ENCODE measurements at regions of chr4 and their contacts with region 1.

Region 1: GRCh38 chr4:37686373-37687193 is at the start of gene RELL1:
- DNase-seq: peak; percentile 96 to 100 (median 99)
- H3K4me3 ChIP-seq: peak within 1 kb of the TSS; percentile 81 to 93 (median 89)
- H3K4me3 Mint-ChIP-seq: peak within 1 kb of the TSS; percentile 88 to 89
- H3K27ac ChIP-seq: peak within 1 kb of the TSS; percentile 78 to 90
- H3K27ac Mint-ChIP-seq: peak within 1 kb of the TSS; percentile 85 to 97 (median 91)
- H3K4me1 ChIP-seq: peaks cover 41 to 54% of the 10 kb centered on the region in 2 donors
- H3K4me1 Mint-ChIP-seq: peaks cover 50% of the 10 kb centered on the region
- H3K27me3 ChIP-seq: no peaks in the 10 kb centered on the region
- H3K27me3 Mint-ChIP-seq: no peaks in the 10 kb centered on the region
- CTCF ChIP-seq: no peak
- polyA plus RNA-seq, gene RELL1: 13.3 to 30.2 (median 16.2) TPM

Region 2: DNA sequence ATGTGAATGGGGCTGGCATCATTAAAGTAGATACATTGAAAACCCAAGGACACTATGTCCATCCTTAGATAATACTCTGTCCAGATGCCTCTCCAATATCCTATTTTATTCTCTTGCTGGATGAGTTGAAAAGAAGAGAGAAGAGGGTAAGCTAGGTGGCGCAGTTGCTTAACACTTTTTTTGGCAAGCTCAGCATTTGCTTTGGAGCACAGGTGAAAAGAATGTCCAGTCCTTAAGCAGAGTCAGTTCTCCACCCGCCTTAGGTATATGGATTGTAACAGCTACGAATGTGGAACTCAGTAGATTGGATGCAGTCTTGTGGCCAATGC is 233.7 kb before region 1 on chr4:
- intact Hi-C with region 1: no loop called
- DNase-seq: peak; percentile 10 to 39 (median 22)
- H3K4me3 ChIP-seq: peak overlapping the region in 1 of 3 experiments; percentile 81
- H3K4me3 Mint-ChIP-seq: peak overlapping the region; percentile 78 to 89
- H3K27ac ChIP-seq: no peak overlapping the region
- H3K27ac Mint-ChIP-seq: peak overlapping the region in 1 of 7 donors; percentile 63
- H3K4me1 ChIP-seq: peaks cover 13 to 16% of the 10 kb centered on the region in 2 donors
- H3K4me1 Mint-ChIP-seq: peaks cover 16% of the 10 kb centered on the region
- H3K27me3 ChIP-seq: peaks cover 36 to 52% of the 10 kb centered on the region in 2 donors
- H3K27me3 Mint-ChIP-seq: peaks cover 38 to 53% (median 43%) of the 10 kb centered on the region in 3 donors
- CTCF ChIP-seq: peak; percentile 45

Region 3: DNA sequence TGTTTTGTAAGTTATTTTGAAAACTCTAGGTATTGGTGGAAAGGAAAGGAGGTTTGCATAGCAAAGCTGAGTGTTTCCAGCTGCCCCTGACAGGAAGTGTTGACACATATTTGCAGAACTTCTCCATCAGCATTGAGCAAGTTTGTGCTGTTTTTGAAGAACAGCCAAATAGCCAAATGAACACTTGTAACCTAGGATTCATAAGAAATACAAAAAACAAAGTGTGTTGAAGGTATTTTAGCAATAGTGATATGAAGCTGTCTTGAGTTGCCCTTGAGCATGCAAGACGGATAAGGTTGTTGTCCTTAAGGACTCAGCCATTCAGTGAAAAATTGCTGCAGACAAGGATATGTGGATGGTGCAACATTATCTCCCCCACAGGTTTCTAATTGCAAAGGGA is 71.6 kb after region 1 on chr4:
- intact Hi-C with region 1: loop called (anchors 5 kb)
- DNase-seq: peak; percentile 86 to 94 (median 90)
- H3K4me3 ChIP-seq: peak overlapping the region in 2 of 3 experiments; percentile 20 to 48
- H3K4me3 Mint-ChIP-seq: peak overlapping the region; percentile 47 to 83
- H3K27ac ChIP-seq: peak overlapping the region; percentile 86 to 92
- H3K27ac Mint-ChIP-seq: peak overlapping the region; percentile 95 to 99 (median 97)
- H3K4me1 ChIP-seq: peaks cover 98 to 100% of the 10 kb centered on the region in 2 donors
- H3K4me1 Mint-ChIP-seq: peaks cover 90% of the 10 kb centered on the region
- H3K27me3 ChIP-seq: no peaks in the 10 kb centered on the region
- H3K27me3 Mint-ChIP-seq: no peaks in the 10 kb centered on the region
- CTCF ChIP-seq: no peak

Region 4: GRCh38 chr4:37977471-37978247 is 291.1 kb after region 1 on chr4:
- intact Hi-C with region 1: loop called (anchors 5 kb)
- DNase-seq: peak; percentile 70 to 85 (median 79)
- H3K4me3 ChIP-seq: peak overlapping the region; percentile 41 to 95 (median 83)
- H3K4me3 Mint-ChIP-seq: peak overlapping the region; percentile 86 to 91
- H3K27ac ChIP-seq: peak overlapping the region; percentile 83 to 93
- H3K27ac Mint-ChIP-seq: peak overlapping the region; percentile 84 to 93 (median 91)
- H3K4me1 ChIP-seq: peaks cover 19 to 22% of the 10 kb centered on the region in 2 donors
- H3K4me1 Mint-ChIP-seq: peaks cover 51% of the 10 kb centered on the region
- H3K27me3 ChIP-seq: no peaks in the 10 kb centered on the region
- H3K27me3 Mint-ChIP-seq: no peaks in the 10 kb centered on the region
- CTCF ChIP-seq: peak; percentile 81